Breast epithelium (tissue), 4 donors: ENCODE measurements at regions of chr15 and their contacts with region 1.

Region 1: GRCh38 chr15:34896185-34896584 is 73.4 kb downstream of the AQR start:
- DNase-seq: no peak
- H3K4me3 ChIP-seq: no peak overlapping the region
- H3K27ac ChIP-seq: no peak overlapping the region
- H3K4me1 ChIP-seq: no peaks in the 10 kb centered on the region
- H3K27me3 ChIP-seq: no peaks in the 10 kb centered on the region
- CTCF ChIP-seq: no peak
- POLR2A ChIP-seq: no peak

Region 2: GRCh38 chr15:34161329-34161955 is 734.7 kb before region 1 on chr15:
- intact Hi-C with region 1: loop called (anchors 5 kb)
- DNase-seq: no peak
- H3K4me3 ChIP-seq: no peak overlapping the region
- H3K27ac ChIP-seq: no peak overlapping the region
- H3K4me1 ChIP-seq: no peaks in the 10 kb centered on the region
- H3K27me3 ChIP-seq: no peaks in the 10 kb centered on the region
- CTCF ChIP-seq: no peak
- POLR2A ChIP-seq: no peak

Region 3: GRCh38 chr15:34470091-34470490 is 426.1 kb before region 1 on chr15:
- intact Hi-C with region 1: no loop called
- DNase-seq: no peak
- H3K4me3 ChIP-seq: no peak overlapping the region
- H3K27ac ChIP-seq: no peak overlapping the region
- H3K4me1 ChIP-seq: no peaks in the 10 kb centered on the region
- H3K27me3 ChIP-seq: no peaks in the 10 kb centered on the region
- CTCF ChIP-seq: no peak
- POLR2A ChIP-seq: no peak

Region 4: DNA sequence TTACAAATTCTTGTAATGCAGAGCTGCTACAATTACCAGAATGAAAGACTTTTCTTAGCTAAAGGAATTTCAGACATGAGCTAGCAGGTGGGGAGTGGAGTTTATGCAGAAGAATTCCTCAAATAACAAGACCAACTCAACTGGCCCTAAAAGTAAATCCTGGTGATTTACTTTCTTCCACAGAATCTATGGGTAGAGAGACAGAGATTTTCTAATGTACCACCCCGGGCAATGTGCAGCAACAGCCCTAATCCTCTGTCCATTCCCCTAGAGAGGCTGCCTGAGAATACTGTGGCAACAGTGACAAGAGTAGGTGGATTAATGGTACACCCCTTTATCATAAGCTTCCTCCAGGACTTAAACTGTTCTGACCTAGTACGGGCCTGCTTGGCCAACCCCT is 18.1 kb after region 1 on chr15:
- intact Hi-C with region 1: no loop called
- DNase-seq: no peak
- H3K4me3 ChIP-seq: no peak overlapping the region
- H3K27ac ChIP-seq: no peak overlapping the region
- H3K4me1 ChIP-seq: no peaks in the 10 kb centered on the region
- H3K27me3 ChIP-seq: no peaks in the 10 kb centered on the region
- CTCF ChIP-seq: no peak
- POLR2A ChIP-seq: no peak